Heart left ventricle (tissue), 16 donors: ENCODE measurements at regions of chr12 and their contacts with region 1.

Region 1: GRCh38 chr12:67648521-67649260 is at the start of gene DYRK2:
- DNase-seq: peak; percentile 83 to 92 (median 87)
- ATAC-seq: peak; percentile 40 to 82 (median 68)
- H3K4me3 ChIP-seq: peak within 1 kb of the TSS; percentile 74 to 99 (median 96)
- H3K27ac ChIP-seq: peak within 1 kb of the TSS; percentile 93 to 99 (median 98)
- H3K4me1 ChIP-seq: peaks cover 8 to 44% (median 29%) of the 10 kb centered on the region in 12 donors
- H3K27me3 ChIP-seq: no peaks in the 10 kb centered on the region
- CTCF ChIP-seq: peak in 6 of 12 donors; percentile 21 to 43 (median 27)
- POLR2A ChIP-seq: peak in 1 of 2 donors; percentile 93
- total RNA-seq, gene DYRK2: 30.5 to 62.9 (median 37.9) TPM

Region 2: DNA sequence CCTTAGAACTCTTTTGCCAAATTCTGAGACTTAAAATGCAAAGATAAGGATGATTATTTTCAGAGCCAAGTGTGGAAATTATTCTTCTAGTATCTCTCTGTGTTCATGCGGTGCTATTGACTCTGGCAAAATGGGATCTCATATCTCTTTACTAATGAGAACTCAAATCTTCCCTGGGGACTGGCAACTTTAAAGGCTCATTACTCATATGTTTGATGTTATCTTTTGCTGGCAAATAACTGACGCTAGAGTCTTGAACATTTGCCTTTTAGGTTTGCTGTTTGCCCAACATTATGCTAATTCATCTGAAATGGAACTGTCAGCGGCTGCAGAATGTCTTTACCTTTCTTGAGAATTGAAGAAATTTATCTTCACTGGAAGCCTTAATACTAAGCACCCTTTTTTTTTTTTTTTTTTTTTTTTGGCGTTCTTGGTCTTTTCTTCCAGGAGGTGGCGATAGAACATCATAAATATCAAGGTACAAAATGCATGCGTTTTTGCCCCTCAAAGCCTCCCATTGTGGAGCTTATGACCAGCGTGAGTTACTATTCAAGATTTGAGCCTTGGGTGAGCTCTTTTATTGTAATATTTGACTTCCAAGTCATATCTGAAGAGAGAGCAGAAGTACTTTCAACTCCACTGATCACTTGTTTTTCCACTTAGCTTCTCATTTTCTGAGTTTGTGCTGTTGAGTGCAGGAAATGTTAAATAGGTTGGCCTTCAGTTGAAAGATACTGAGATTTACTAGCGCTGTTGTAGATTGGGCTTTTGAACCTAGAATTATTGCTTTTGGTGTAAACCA is 292.9 kb before region 1 on chr12:
- intact Hi-C with region 1: loop called in 3 of 10 experiments (anchors 5 to 10 kb)
- DNase-seq: no peak
- ATAC-seq: peak in 3 of 4 donors; percentile 47 to 67 (median 60)
- H3K4me3 ChIP-seq: peak overlapping the region in 1 of 12 donors; percentile 3
- H3K27ac ChIP-seq: peak overlapping the region in 6 of 12 donors; percentile 16 to 52 (median 45)
- H3K4me1 ChIP-seq: peaks cover 0 to 58% (median 31%) of the 10 kb centered on the region in 12 donors
- H3K27me3 ChIP-seq: no peaks in the 10 kb centered on the region
- CTCF ChIP-seq: peak; percentile 41 to 75 (median 64)
- POLR2A ChIP-seq: no peak

Region 3: GRCh38 chr12:67449591-67450052 is 199.1 kb before region 1 on chr12:
- intact Hi-C with region 1: loop called in 7 of 10 experiments (anchors 5 to 10 kb)
- DNase-seq: no peak
- ATAC-seq: no peak
- H3K4me3 ChIP-seq: no peak overlapping the region
- H3K27ac ChIP-seq: no peak overlapping the region
- H3K4me1 ChIP-seq: peaks cover 0 to 7% (median 0%) of the 10 kb centered on the region in 12 donors
- H3K27me3 ChIP-seq: no peaks in the 10 kb centered on the region
- CTCF ChIP-seq: no peak
- POLR2A ChIP-seq: no peak

Region 4: GRCh38 chr12:67671382-67671781 is 22.7 kb after region 1 on chr12:
- intact Hi-C with region 1: no loop called
- DNase-seq: no peak
- ATAC-seq: peak in 1 of 4 donors; percentile 51
- H3K4me3 ChIP-seq: no peak overlapping the region
- H3K27ac ChIP-seq: peak overlapping the region in 6 of 12 donors; percentile 7 to 59 (median 36)
- H3K4me1 ChIP-seq: peaks cover 5 to 51% (median 29%) of the 10 kb centered on the region in 12 donors
- H3K27me3 ChIP-seq: no peaks in the 10 kb centered on the region
- CTCF ChIP-seq: no peak
- POLR2A ChIP-seq: no peak

Region 5: DNA sequence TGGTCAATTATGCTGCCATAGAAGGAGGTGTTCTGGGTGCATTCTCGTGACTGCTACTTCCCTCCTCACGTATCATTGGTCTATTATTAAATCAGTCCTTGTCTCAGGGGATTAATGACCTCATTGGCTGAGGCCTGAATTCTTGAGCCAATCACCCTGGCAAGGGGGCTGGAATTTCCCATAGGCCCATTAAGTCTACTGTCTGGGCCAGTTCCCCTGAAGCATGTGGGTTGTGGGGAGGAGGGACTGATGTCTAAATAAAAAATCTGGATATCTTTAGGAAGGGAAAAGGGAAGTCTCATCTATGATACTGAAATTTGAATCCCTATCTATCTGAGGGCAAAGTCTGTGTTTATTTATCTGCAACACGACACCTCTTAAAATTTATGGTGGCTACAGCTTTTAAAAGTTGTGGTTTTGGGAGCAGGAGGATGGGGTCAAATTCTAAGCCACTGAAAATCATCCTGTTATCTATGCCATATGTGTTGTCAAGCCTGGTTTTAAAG is 71.7 kb after region 1 on chr12:
- intact Hi-C with region 1: loop called in 4 of 10 experiments (anchors 2 to 10 kb)
- DNase-seq: peak in 4 of 5 donors; percentile 52 to 70 (median 61)
- ATAC-seq: peak; percentile 62 to 84 (median 80)
- H3K4me3 ChIP-seq: no peak overlapping the region
- H3K27ac ChIP-seq: peak overlapping the region in 11 of 12 donors; percentile 46 to 83 (median 65)
- H3K4me1 ChIP-seq: peaks cover 0 to 35% (median 19%) of the 10 kb centered on the region in 12 donors
- H3K27me3 ChIP-seq: no peaks in the 10 kb centered on the region
- CTCF ChIP-seq: no peak
- POLR2A ChIP-seq: no peak

Region 6: GRCh38 chr12:67827820-67828383 is 179.2 kb after region 1 on chr12:
- intact Hi-C with region 1: loop called in 1 of 10 experiments (anchors 10 kb)
- DNase-seq: peak in 3 of 5 donors; percentile 29 to 64 (median 31)
- ATAC-seq: peak; percentile 79 to 96 (median 93)
- H3K4me3 ChIP-seq: peak overlapping the region in 9 of 12 donors; percentile 26 to 57 (median 41)
- H3K27ac ChIP-seq: peak overlapping the region; percentile 7 to 87 (median 82)
- H3K4me1 ChIP-seq: peaks cover 0 to 31% (median 14%) of the 10 kb centered on the region in 12 donors
- H3K27me3 ChIP-seq: no peaks in the 10 kb centered on the region
- CTCF ChIP-seq: no peak
- POLR2A ChIP-seq: no peak

Region 7: DNA sequence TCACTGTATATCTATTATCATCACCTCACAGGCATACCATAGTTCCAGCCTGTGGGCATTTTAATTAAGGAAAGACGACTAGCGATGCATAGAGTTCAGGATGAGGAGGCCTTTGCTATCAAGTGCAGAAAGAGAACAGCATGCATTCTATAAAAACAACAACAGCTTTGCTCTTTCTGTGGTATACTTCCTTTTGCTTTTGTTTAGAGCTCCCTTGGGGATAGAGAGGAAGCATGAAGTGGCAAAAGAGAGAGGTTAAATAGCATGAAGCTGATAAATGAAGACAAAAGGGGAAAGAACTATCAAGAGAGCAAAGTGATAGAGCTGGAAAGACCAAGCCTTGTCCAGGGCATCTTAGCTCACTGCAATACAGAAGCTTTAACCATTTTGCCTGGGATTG is 364.0 kb after region 1 on chr12:
- intact Hi-C with region 1: no loop called
- DNase-seq: no peak
- ATAC-seq: no peak
- H3K4me3 ChIP-seq: no peak overlapping the region
- H3K27ac ChIP-seq: no peak overlapping the region
- H3K4me1 ChIP-seq: peaks cover 0 to 5% (median 0%) of the 10 kb centered on the region in 12 donors
- H3K27me3 ChIP-seq: no peaks in the 10 kb centered on the region
- CTCF ChIP-seq: no peak
- POLR2A ChIP-seq: no peak